Naive thymus-derived CD4-positive, alpha-beta T cell (primary cell): ENCODE measurements at regions of chr6 and their contacts with region 1.

Region 1: DNA sequence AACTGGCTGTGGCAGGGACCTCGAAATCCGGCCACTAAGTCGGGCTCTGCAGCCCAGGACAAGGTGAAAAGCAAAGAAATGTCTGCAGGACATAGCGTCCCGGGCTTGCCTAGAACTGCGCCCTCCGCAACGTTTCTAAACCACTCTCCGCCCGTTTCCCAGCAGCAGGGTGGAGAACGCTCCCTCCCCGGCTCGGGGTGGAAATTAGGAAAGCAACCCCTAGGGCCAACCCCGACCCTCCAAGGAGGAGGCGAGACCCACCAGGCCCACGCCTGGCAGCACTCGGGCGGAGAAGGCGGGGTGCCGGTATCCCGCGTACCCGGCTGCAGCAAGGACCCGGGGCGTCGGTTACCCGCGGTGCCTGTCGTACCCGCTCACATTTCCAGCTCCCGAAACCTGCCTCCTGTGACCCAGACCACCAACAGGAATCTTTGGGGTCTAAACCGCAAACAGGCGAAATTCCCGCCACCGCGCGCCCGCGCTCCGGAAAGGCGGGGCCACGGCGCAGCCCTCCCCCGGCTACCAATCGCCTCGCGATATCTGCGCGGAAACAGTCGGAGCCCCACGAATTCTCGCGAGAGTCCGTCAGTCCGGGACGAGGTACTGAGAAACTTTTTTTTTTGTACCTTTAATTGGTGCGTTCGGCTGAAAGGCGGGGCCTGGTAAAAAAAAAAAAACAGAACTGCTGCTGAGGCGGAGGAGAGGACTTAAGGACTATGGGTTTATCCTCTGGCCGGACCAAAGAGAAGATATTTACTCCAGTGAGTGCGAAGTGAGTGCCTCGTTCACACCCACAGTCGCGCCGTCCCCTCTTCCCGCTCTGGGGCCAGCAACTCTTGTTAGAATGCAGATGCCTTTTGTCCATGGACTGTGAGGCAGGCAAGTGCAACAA is at the start of gene MMS22L:
- DNase-seq: peak; percentile 83 to 93 (median 90)
- ATAC-seq: peak; percentile 99
- H3K4me3 ChIP-seq: peak within 1 kb of the TSS; percentile 90
- H3K4me3 Mint-ChIP-seq: peak within 1 kb of the TSS; percentile 90 to 98 (median 96)
- H3K27ac ChIP-seq: peak within 1 kb of the TSS; percentile 70
- H3K27ac Mint-ChIP-seq: peak within 1 kb of the TSS; percentile 83 to 96 (median 89)
- H3K4me1 ChIP-seq: peaks cover 0 to 16% of the 10 kb centered on the region in 2 donors
- H3K4me1 Mint-ChIP-seq: peaks cover 5 to 37% (median 24%) of the 10 kb centered on the region in 7 donors
- H3K27me3 ChIP-seq: no peaks in the 10 kb centered on the region
- H3K27me3 Mint-ChIP-seq: peaks cover 0 to 8% (median 0%) of the 10 kb centered on the region in 5 donors
- total RNA-seq, gene MMS22L: 11.8 to 48.1 (median 12.9) TPM

Region 2: GRCh38 chr6:96923871-96924493 is 359.0 kb before region 1 on chr6:
- CTCF ChIA-PET with region 1: no interaction called
- POLR2A ChIA-PET with region 1: interaction called, 4 read pairs
- intact Hi-C with region 1: loop called (anchors 1 to 2 kb)
- DNase-seq: peak in 1 of 9 donors; percentile 5
- ATAC-seq: peak; percentile 3
- H3K4me3 ChIP-seq: peak overlapping the region; percentile 68
- H3K4me3 Mint-ChIP-seq: peak overlapping the region; percentile 91 to 99 (median 98)
- H3K27ac ChIP-seq: peak overlapping the region; percentile 87
- H3K27ac Mint-ChIP-seq: peak overlapping the region; percentile 91 to 100 (median 99)
- H3K4me1 ChIP-seq: peaks cover 13 to 16% of the 10 kb centered on the region in 2 donors
- H3K4me1 Mint-ChIP-seq: peaks cover 8 to 50% (median 33%) of the 10 kb centered on the region in 7 donors
- H3K27me3 ChIP-seq: no peaks in the 10 kb centered on the region
- H3K27me3 Mint-ChIP-seq: peaks cover 0 to 22% (median 4%) of the 10 kb centered on the region in 5 donors

Region 3: DNA sequence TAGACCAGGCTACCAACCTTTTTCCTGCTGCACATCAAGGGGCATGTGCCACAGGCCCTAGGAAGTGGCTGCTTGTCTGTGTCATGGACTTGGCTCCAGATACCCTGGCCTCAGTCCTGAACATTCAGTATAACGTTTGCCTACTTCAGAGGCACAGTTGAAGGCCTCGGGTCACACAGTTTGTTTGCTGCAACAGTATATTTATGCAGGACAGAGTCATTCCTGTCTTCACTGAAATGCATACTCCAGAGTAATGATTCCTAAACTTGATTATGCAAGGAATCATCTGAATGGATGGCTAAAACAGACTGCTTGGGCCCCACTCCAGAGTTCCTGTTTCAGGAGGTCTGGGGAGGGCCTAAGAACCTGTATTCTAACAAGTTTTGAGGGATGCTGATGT is 209.1 kb before region 1 on chr6:
- CTCF ChIA-PET with region 1: no interaction called
- POLR2A ChIA-PET with region 1: no interaction called
- intact Hi-C with region 1: loop called in 1 of 2 experiments (anchors 5 kb)
- DNase-seq: no peak
- ATAC-seq: no peak
- H3K4me3 ChIP-seq: no peak overlapping the region
- H3K4me3 Mint-ChIP-seq: no peak overlapping the region
- H3K27ac ChIP-seq: no peak overlapping the region
- H3K27ac Mint-ChIP-seq: no peak overlapping the region
- H3K4me1 ChIP-seq: no peaks in the 10 kb centered on the region
- H3K4me1 Mint-ChIP-seq: no peaks in the 10 kb centered on the region
- H3K27me3 ChIP-seq: no peaks in the 10 kb centered on the region
- H3K27me3 Mint-ChIP-seq: no peaks in the 10 kb centered on the region

Region 4: DNA sequence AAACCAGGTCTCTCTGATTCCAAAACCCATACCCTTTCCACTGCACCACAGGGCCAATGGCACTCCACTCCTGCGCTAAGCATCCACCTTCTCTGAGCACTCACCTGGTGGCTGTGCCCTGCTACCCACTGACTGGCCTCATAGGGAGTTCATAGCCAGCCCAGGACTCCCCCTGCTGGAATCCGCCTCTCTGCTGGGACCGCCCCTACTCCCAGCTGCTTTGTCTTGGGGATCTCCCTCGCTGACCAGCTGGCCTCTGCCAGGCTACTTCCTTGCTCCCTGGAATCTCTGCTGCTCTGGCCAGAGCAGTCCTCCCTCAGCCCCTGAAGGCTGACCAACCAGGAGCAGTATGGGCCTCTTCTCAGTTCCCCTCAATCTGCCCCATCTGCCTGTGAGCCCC is 1936.8 kb after region 1 on chr6:
- CTCF ChIA-PET with region 1: no interaction called
- POLR2A ChIA-PET with region 1: no interaction called
- intact Hi-C with region 1: no loop called
- DNase-seq: no peak
- ATAC-seq: no peak
- H3K4me3 ChIP-seq: no peak overlapping the region
- H3K4me3 Mint-ChIP-seq: no peak overlapping the region
- H3K27ac ChIP-seq: no peak overlapping the region
- H3K27ac Mint-ChIP-seq: no peak overlapping the region
- H3K4me1 ChIP-seq: no peaks in the 10 kb centered on the region
- H3K4me1 Mint-ChIP-seq: no peaks in the 10 kb centered on the region
- H3K27me3 ChIP-seq: no peaks in the 10 kb centered on the region
- H3K27me3 Mint-ChIP-seq: peaks cover 0 to 25% (median 8%) of the 10 kb centered on the region in 5 donors